HepG2 (cell line): ENCODE measurements at regions of chr20 and their contacts with region 1.

Region 1: GRCh38 chr20:63864847-63865640 is at the start of gene TPD52L2:
- DNase-seq: peak; percentile 100
- ATAC-seq: peak; percentile 86
- H3K4me3 ChIP-seq: peak within 1 kb of the TSS; percentile 78 to 96 (median 87)
- H3K27ac ChIP-seq: peak within 1 kb of the TSS; percentile 89
- H3K4me1 ChIP-seq: peaks cover 42% of the 10 kb centered on the region
- H3K27me3 ChIP-seq: no peaks in the 10 kb centered on the region; a peak in 1 of 5 replicates
- CTCF ChIP-seq: no peak; the same call in 1 of the 2 replicates
- EP300 ChIP-seq: peak; percentile 34 to 48; a peak in 1 of 4 replicates
- POLR2A ChIP-seq: peak in 1 of 2 experiments; percentile 98; a peak in 2 of 4 replicates
- RAD21 ChIP-seq: peak; percentile 75
- total RNA-seq, gene TPD52L2: 156 and 187 TPM in 2 replicates

Region 2: GRCh38 chr20:63537525-63538203 is 327.4 kb before region 1 on chr20:
- CTCF ChIA-PET with region 1: interaction called, 9 read pairs
- POLR2A ChIA-PET with region 1: interaction called, 6 read pairs
- in situ Hi-C with region 1: no loop called
- intact Hi-C with region 1: loop called (anchors 2 kb)
- DNase-seq: peak; percentile 86
- ATAC-seq: peak; percentile 79
- H3K4me3 ChIP-seq: peak overlapping the region; percentile 37 to 76 (median 64); a peak in 5 of 6 replicates
- H3K27ac ChIP-seq: no peak overlapping the region
- H3K4me1 ChIP-seq: peaks cover 48% of the 10 kb centered on the region
- H3K27me3 ChIP-seq: peaks cover 48 to 65% of the 10 kb centered on the region in 2 experiments
- CTCF ChIP-seq: peak; percentile 99
- EP300 ChIP-seq: peak; percentile 12 to 30; a peak in 2 of 4 replicates
- POLR2A ChIP-seq: 0 out of 4 replicates have a peak, but pooled peaks of 1 of the 2 experiments have one; percentile 30
- RAD21 ChIP-seq: peak; percentile 100

Region 3: GRCh38 chr20:63657937-63658748 is 206.9 kb before region 1 on chr20 and contains the start of gene RTEL1:
- CTCF ChIA-PET with region 1: no interaction called
- POLR2A ChIA-PET with region 1: interaction called, 14 read pairs
- in situ Hi-C with region 1: no loop called
- intact Hi-C with region 1: no loop called
- DNase-seq: peak; percentile 93
- ATAC-seq: peak; percentile 93
- H3K4me3 ChIP-seq: peak within 1 kb of the TSS; percentile 78 to 95 (median 94)
- H3K27ac ChIP-seq: peak within 1 kb of the TSS; percentile 65
- H3K4me1 ChIP-seq: peaks cover 40% of the 10 kb centered on the region
- H3K27me3 ChIP-seq: no peaks in the 10 kb centered on the region; a peak in 1 of 5 replicates
- CTCF ChIP-seq: no peak; the same call in 1 of the 2 replicates
- EP300 ChIP-seq: peak; percentile 24 to 66; a peak in 3 of 4 replicates
- POLR2A ChIP-seq: peak; percentile 74 to 78
- RAD21 ChIP-seq: peak; percentile 79
- total RNA-seq, gene RTEL1: 10.9 and 21.8 TPM in 2 replicates

Region 4: DNA sequence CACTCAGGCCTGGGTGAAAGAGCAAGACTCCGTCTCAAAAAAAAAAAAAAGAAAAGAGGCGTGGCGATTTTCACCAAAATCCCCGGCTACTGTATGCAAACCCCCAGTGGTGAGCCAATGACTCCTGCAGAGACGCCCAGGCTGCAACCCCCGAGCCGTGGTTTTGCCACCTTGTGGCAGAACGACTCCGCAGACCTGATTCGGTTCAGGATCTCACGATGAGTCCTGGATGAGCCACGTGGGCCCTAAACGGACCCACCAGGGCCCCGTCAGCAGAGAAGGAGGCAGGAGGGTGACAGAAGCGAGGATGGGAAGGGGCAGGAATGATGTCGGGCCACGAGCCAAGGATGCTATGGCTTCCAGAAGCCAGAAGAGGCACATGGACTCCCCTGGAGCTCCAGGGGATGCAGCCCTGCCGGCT is 83.0 kb before region 1 on chr20:
- CTCF ChIA-PET with region 1: interaction called, 11 read pairs
- POLR2A ChIA-PET with region 1: interaction called, 11 read pairs
- in situ Hi-C with region 1: no loop called
- intact Hi-C with region 1: loop called (anchors 2 kb)
- DNase-seq: peak; percentile 60
- ATAC-seq: peak; percentile 84
- H3K4me3 ChIP-seq: peak overlapping the region in 1 of 3 experiments; percentile 25; a peak in 1 of 6 replicates
- H3K27ac ChIP-seq: no peak overlapping the region
- H3K4me1 ChIP-seq: peaks cover 21% of the 10 kb centered on the region
- H3K27me3 ChIP-seq: no peaks in the 10 kb centered on the region
- CTCF ChIP-seq: peak; percentile 78
- EP300 ChIP-seq: no peak
- POLR2A ChIP-seq: no peak
- RAD21 ChIP-seq: peak; percentile 66; the same call in 1 of the 2 replicates

Region 5: DNA sequence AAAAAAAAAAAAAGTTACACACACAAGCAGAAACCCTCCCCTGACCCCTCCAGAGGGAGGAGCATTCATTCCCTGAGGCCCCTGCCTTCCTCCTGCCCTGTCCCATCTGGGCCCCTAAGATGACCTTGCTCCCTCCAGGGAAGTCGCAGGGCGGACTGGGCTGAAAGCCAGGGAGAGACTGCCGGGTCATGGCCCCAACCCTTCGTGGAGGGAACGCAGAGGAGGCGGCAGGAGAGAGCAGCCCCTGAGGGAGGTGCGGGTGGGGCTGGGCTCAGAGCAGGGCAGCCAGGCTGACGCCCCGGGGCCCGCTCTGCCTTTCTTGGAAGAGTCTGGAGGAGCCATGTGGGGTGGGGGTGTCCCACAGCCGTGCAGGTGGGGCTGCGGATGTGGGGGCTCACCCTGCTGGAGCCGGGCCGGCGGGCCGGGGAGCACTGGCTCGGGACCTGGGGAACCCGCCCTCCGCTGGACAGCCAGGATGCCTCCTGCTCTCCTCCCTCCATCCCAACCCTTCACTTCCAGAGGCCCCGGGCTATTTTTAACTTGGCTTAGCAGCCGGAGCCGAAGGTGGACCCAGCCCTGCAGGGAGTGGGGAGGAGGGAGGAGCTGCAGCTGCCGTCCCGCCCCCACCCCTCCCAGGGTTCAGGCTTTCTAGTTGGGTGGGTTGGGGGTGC is 18.8 kb before region 1 on chr20:
- CTCF ChIA-PET with region 1: no interaction called
- POLR2A ChIA-PET with region 1: interaction called, 29 read pairs
- in situ Hi-C with region 1: no loop called
- intact Hi-C with region 1: no loop called
- DNase-seq: peak; percentile 75
- ATAC-seq: peak; percentile 51
- H3K4me3 ChIP-seq: peak overlapping the region; percentile 35 to 67 (median 43); a peak in 5 of 6 replicates
- H3K27ac ChIP-seq: no peak overlapping the region
- H3K4me1 ChIP-seq: peaks cover 41% of the 10 kb centered on the region
- H3K27me3 ChIP-seq: peaks cover 12 to 40% of the 10 kb centered on the region in 2 experiments
- CTCF ChIP-seq: peak; percentile 30
- EP300 ChIP-seq: peak in 1 of 2 experiments; percentile 59; a peak in 1 of 4 replicates
- POLR2A ChIP-seq: no peak
- RAD21 ChIP-seq: no peak

Region 6: GRCh38 chr20:63955827-63956663 is 91.0 kb after region 1 on chr20 and contains the start of gene UCKL1:
- CTCF ChIA-PET with region 1: no interaction called
- POLR2A ChIA-PET with region 1: interaction called, 43 read pairs
- in situ Hi-C with region 1: no loop called
- intact Hi-C with region 1: no loop called
- DNase-seq: peak; percentile 91
- ATAC-seq: peak; percentile 80
- H3K4me3 ChIP-seq: peak within 1 kb of the TSS; percentile 92 to 100 (median 99)
- H3K27ac ChIP-seq: peak within 1 kb of the TSS; percentile 99
- H3K4me1 ChIP-seq: peaks cover 66% of the 10 kb centered on the region
- H3K27me3 ChIP-seq: no peaks in the 10 kb centered on the region
- CTCF ChIP-seq: peak; percentile 19; the same call in 1 of the 2 replicates
- EP300 ChIP-seq: peak in 1 of 2 experiments; percentile 79; a peak in 3 of 4 replicates
- POLR2A ChIP-seq: peak in 1 of 2 experiments; percentile 96; a peak in 2 of 4 replicates
- RAD21 ChIP-seq: peak; percentile 77
- total RNA-seq, gene UCKL1: 48.0 and 50.2 TPM in 2 replicates

Region 7: DNA sequence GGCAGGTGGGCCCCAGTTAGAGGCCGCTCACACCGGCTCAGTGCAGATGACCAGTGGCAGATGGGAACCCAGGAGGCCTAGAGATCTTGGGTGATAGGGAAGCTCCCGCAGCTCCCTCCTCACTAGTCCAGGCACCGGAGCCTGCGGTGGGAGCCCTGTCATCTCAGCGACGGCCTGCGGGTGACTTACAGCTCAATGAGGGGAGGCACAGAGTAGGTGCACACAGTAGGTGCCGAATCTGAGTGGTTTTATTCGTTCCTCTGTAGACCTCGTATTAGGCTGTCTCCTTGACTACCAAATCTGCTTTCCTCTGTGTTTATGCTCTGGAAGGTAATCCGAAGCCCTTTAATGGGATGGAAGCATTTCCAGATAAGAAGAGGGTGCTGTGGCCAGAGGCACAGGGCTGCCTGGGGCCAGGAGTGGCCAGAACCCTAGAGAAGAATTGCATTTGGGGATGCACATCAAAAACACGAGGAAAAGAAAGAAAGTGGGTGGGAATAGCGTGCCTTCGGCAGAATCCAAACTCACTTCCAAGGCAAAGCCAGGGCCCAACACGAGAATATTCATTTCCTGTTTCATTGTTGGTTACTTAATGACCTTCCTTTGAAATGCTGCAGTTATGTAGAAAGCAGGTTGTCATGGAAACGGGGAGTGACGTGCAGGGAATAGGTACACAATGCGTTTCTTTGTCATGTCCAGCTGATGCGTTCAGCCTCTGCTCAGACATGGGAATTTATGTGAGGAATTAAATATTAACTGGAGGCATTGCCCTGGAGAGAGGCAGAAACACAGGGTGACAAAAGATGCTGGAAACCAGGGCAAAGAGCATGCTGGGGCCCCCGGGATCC is 323.9 kb after region 1 on chr20:
- CTCF ChIA-PET with region 1: no interaction called
- POLR2A ChIA-PET with region 1: no interaction called
- in situ Hi-C with region 1: no loop called
- intact Hi-C with region 1: no loop called
- DNase-seq: peak; percentile 100
- ATAC-seq: peak; percentile 91
- H3K4me3 ChIP-seq: peak overlapping the region in 1 of 3 experiments; percentile 64; a peak in 2 of 6 replicates
- H3K27ac ChIP-seq: peak overlapping the region; percentile 88
- H3K4me1 ChIP-seq: peaks cover 45% of the 10 kb centered on the region
- H3K27me3 ChIP-seq: peaks cover 3 to 6% of the 10 kb centered on the region in 2 experiments; a peak in 1 of 5 replicates
- CTCF ChIP-seq: no peak; the same call in 1 of the 2 replicates
- EP300 ChIP-seq: peak; percentile 65 to 79; a peak in 3 of 4 replicates
- POLR2A ChIP-seq: no peak
- RAD21 ChIP-seq: no peak